ENCODE measurements at regions of chr6 and their contacts with region 1.

Region 1: GRCh38 chr6:27126815-27127537 is 120.5 kb upstream of the PRSS16 start:
- DNase-seq: peak; percentile 85
- ATAC-seq: peak; percentile 72
- H3K4me3 ChIP-seq: peak overlapping the region; percentile 72
- H3K27ac ChIP-seq: peak overlapping the region; percentile 93
- H3K4me1 ChIP-seq: peaks cover 16% of the 10 kb centered on the region
- H3K27me3 ChIP-seq: no peaks in the 10 kb centered on the region
- CTCF ChIP-seq: peak; percentile 73 to 98 (median 83); a peak in 5 of 6 replicates
- EP300 ChIP-seq: no peak
- POLR2A ChIP-seq: peak; percentile 54
- RAD21 ChIP-seq: peak; percentile 86

Region 2: GRCh38 chr6:26607434-26608230 is 519.3 kb before region 1 on chr6:
- CTCF ChIA-PET with region 1: no interaction called
- POLR2A ChIA-PET with region 1: no interaction called
- RAD21 ChIA-PET with region 1: no interaction called
- SMC1A ChIA-PET with region 1: no interaction called
- in situ Hi-C with region 1: no loop called
- intact Hi-C with region 1: loop called (anchors 2 kb)
- DNase-seq: no peak
- ATAC-seq: peak; percentile 99
- H3K4me3 ChIP-seq: no peak overlapping the region
- H3K27ac ChIP-seq: no peak overlapping the region
- H3K4me1 ChIP-seq: no peaks in the 10 kb centered on the region; the same call in 1 of the 2 replicates
- H3K27me3 ChIP-seq: no peaks in the 10 kb centered on the region
- CTCF ChIP-seq: peak; percentile 73 to 87 (median 78)
- EP300 ChIP-seq: no peak
- POLR2A ChIP-seq: no peak
- RAD21 ChIP-seq: peak; percentile 96

Region 3: GRCh38 chr6:27031302-27031701 is 95.7 kb before region 1 on chr6:
- CTCF ChIA-PET with region 1: no interaction called
- POLR2A ChIA-PET with region 1: no interaction called
- RAD21 ChIA-PET with region 1: no interaction called
- SMC1A ChIA-PET with region 1: no interaction called
- in situ Hi-C with region 1: no loop called
- intact Hi-C with region 1: no loop called
- DNase-seq: no peak
- ATAC-seq: no peak
- H3K4me3 ChIP-seq: no peak overlapping the region
- H3K27ac ChIP-seq: no peak overlapping the region
- H3K4me1 ChIP-seq: no peaks in the 10 kb centered on the region
- H3K27me3 ChIP-seq: no peaks in the 10 kb centered on the region
- CTCF ChIP-seq: no peak
- EP300 ChIP-seq: no peak
- POLR2A ChIP-seq: no peak
- RAD21 ChIP-seq: no peak

Region 4: DNA sequence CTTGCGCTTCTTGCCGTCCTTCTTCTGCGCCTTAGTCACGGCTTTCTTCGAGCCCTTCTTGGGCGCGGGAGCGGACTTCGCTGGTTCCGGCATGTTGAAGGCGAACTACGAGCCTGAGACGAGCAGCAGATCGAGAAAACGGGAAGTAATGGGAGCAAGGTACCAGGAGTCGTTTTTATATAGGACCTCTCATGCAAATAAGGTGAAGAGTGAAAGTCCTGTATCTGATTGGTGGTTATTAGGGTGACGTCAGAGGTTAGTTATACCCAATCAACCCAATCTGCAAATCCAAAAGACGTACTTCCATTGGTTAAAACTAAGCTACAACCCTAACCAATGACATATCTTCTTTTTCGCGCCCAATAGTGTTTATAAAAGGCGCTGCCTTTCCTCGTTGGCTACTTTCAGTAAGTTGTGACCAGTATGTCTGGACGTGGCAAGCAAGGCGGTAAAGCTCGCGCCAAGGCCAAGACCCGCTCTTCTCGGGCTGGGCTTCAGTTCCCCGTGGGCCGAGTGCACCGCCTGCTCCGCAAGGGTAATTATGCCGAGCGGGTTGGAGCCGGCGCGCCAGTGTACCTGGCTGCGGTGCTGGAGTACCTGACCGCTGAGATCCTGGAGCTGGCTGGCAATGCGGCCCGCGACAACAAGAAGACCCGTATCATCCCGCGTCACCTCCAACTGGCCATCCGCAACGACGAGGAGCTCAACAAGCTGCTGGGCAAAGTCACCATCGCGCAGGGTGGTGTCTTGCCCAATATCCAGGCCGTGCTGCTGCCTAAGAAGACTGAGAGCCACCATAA is 19.9 kb after region 1 on chr6:
- CTCF ChIA-PET with region 1: interaction called, 46 read pairs
- POLR2A ChIA-PET with region 1: interaction called, 62 read pairs
- RAD21 ChIA-PET with region 1: interaction called, 40 read pairs
- SMC1A ChIA-PET with region 1: interaction called, 96 read pairs
- in situ Hi-C with region 1: no loop called
- intact Hi-C with region 1: loop called (anchors 1 kb)
- DNase-seq: peak; percentile 100
- ATAC-seq: peak; percentile 73
- H3K4me3 ChIP-seq: peak overlapping the region; percentile 92
- H3K27ac ChIP-seq: peak overlapping the region; percentile 98
- H3K4me1 ChIP-seq: peaks cover 10% of the 10 kb centered on the region; the same call in 1 of the 2 replicates
- H3K27me3 ChIP-seq: no peaks in the 10 kb centered on the region
- CTCF ChIP-seq: no peak
- EP300 ChIP-seq: no peak; a peak in 1 of 4 replicates
- POLR2A ChIP-seq: peak; percentile 88
- RAD21 ChIP-seq: no peak

Region 5: DNA sequence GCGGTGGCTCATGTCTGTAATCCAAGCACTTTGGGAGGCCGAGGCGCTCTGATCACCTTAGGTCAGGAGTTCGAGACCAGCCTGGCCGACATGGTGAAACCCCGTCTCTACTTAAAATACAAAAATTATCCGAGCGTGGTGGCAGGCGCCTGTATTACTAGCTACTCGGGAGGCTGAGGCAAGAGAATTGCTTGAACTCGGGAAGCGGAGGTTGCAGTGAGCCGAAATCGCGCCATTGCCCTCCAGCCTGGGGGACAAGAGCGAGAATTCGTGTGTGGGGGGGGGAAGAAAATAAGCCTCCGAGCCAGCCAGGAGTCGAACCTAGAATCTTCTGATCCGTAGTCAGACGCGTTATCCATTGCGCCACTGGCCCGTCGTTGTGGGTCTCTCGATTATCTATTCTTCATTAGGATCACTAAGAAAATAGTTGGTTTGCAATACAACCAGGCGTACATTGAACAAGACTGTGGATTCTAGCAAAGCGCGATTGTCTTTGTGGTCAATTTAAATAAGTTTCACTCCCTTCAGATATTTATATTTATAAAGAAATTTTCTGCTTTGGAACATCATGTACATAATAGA is 86.7 kb after region 1 on chr6:
- CTCF ChIA-PET with region 1: no interaction called
- POLR2A ChIA-PET with region 1: no interaction called
- RAD21 ChIA-PET with region 1: no interaction called
- SMC1A ChIA-PET with region 1: no interaction called
- in situ Hi-C with region 1: no loop called
- intact Hi-C with region 1: no loop called
- DNase-seq: no peak
- ATAC-seq: no peak
- H3K4me3 ChIP-seq: 0 out of 2 replicates have a peak overlapping the region, but pooled peaks have one; percentile 69
- H3K27ac ChIP-seq: no peak overlapping the region
- H3K4me1 ChIP-seq: no peaks in the 10 kb centered on the region
- H3K27me3 ChIP-seq: no peaks in the 10 kb centered on the region
- CTCF ChIP-seq: no peak
- EP300 ChIP-seq: no peak
- POLR2A ChIP-seq: no peak
- RAD21 ChIP-seq: no peak

Measured in GM12878 (cell line).